ENCODE measurements at regions of chr12 and their contacts with region 1.

Region 1: GRCh38 chr12:54359033-54359761 is 5.1 kb downstream of the GPR84 start:
- DNase-seq: peak; percentile 97
- ATAC-seq: peak; percentile 96
- H3K4me3 ChIP-seq: peak overlapping the region; percentile 84
- H3K27ac ChIP-seq: peak overlapping the region; percentile 92
- H3K4me1 ChIP-seq: peaks cover 23% of the 10 kb centered on the region
- H3K27me3 ChIP-seq: no peaks in the 10 kb centered on the region
- CTCF ChIP-seq: no peak
- EP300 ChIP-seq: peak in 1 of 2 experiments; percentile 55; a peak in 2 of 4 replicates
- POLR2A ChIP-seq: peak; percentile 63
- RAD21 ChIP-seq: no peak

Region 2: DNA sequence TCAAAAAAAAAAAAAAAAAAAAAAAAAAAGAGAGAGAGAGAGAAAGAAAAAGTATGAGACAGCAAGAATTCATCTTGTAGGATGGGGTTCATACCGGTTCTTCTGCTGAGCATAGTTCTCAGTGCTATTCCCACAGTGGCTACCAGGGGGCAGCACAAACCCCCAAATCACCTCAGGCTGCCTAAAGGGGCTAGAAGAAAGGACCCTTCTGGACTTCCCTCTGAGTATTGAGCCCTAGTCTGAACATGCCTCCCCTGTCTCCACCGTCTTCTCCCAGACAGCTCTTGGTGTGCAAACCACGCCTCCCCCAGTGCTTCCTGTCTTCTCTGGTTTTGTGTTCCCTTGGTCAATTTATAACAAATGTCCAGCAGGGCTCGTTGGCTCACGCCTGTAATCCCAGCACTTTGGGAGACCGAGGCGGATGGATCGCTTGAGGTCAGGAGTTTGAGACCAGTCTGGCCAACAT is 139.1 kb before region 1 on chr12:
- CTCF ChIA-PET with region 1: interaction called, 83 read pairs
- POLR2A ChIA-PET with region 1: interaction called, 4 read pairs
- RAD21 ChIA-PET with region 1: interaction called, 16 read pairs
- SMC1A ChIA-PET with region 1: interaction called, 10 read pairs
- in situ Hi-C with region 1: loop called (anchors 5 kb)
- intact Hi-C with region 1: loop called (anchors 2 kb)
- DNase-seq: no peak
- ATAC-seq: peak; percentile 58
- H3K4me3 ChIP-seq: no peak overlapping the region
- H3K27ac ChIP-seq: no peak overlapping the region
- H3K4me1 ChIP-seq: peaks cover 30% of the 10 kb centered on the region
- H3K27me3 ChIP-seq: peaks cover 0 to 1% of the 10 kb centered on the region in 2 experiments; a peak in 1 of 4 replicates
- CTCF ChIP-seq: peak; percentile 84 to 90 (median 90)
- EP300 ChIP-seq: no peak
- POLR2A ChIP-seq: no peak
- RAD21 ChIP-seq: peak; percentile 87

Region 3: DNA sequence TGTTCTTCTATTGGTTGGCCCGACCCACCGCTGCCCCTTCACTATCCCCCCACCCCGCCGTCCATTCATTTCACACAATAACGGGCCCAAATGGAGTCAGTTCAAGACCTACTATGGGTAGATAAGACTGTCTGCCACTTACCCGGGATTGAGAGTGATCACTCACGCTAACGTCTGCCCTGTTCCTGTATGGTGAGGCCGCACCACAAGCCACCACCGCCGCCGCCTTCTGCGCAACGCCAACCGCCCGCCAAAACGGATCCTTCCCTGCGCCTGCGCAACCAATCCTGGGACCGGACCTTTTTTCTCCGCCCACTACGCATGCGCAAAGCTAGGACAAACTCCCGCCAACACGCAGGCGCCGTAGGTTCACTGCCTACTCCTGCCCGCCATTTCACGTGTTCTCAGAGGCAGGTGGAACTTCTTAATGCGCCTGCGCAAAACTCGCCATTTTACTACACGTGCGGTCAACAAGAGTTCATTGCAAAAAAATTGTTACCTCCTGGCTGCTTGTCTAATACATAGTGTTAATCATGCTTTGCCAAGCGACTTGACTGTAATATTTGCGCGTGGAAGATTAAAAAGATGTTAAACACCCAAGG is 79.2 kb before region 1 on chr12 and contains the start of gene CBX5:
- CTCF ChIA-PET with region 1: interaction called, 13 read pairs
- POLR2A ChIA-PET with region 1: interaction called, 29 read pairs
- RAD21 ChIA-PET with region 1: interaction called, 11 read pairs
- SMC1A ChIA-PET with region 1: interaction called, 12 read pairs
- in situ Hi-C with region 1: no loop called
- intact Hi-C with region 1: no loop called
- DNase-seq: peak; percentile 98
- ATAC-seq: peak; percentile 48
- H3K4me3 ChIP-seq: peak within 1 kb of the TSS; percentile 81
- H3K27ac ChIP-seq: peak within 1 kb of the TSS; percentile 99
- H3K4me1 ChIP-seq: peaks cover 18% of the 10 kb centered on the region
- H3K27me3 ChIP-seq: no peaks in the 10 kb centered on the region
- CTCF ChIP-seq: no peak
- EP300 ChIP-seq: no peak
- POLR2A ChIP-seq: peak; percentile 83
- RAD21 ChIP-seq: no peak
- polyA plus RNA-seq, gene CBX5: 66.9 to 67.1 TPM

Region 4: GRCh38 chr12:54294152-54294952 is 64.8 kb before region 1 on chr12:
- CTCF ChIA-PET with region 1: interaction called, 116 read pairs
- POLR2A ChIA-PET with region 1: interaction called, 10 read pairs
- RAD21 ChIA-PET with region 1: interaction called, 5 read pairs
- SMC1A ChIA-PET with region 1: interaction called, 10 read pairs
- in situ Hi-C with region 1: loop called (anchors 5 kb)
- intact Hi-C with region 1: loop called (anchors 2 kb)
- DNase-seq: no peak
- ATAC-seq: peak; percentile 81
- H3K4me3 ChIP-seq: no peak overlapping the region
- H3K27ac ChIP-seq: no peak overlapping the region
- H3K4me1 ChIP-seq: no peaks in the 10 kb centered on the region
- H3K27me3 ChIP-seq: peaks cover 0 to 4% of the 10 kb centered on the region in 2 experiments
- CTCF ChIP-seq: peak; percentile 74 to 94 (median 91)
- EP300 ChIP-seq: no peak
- POLR2A ChIP-seq: no peak
- RAD21 ChIP-seq: peak; percentile 86

Region 5: GRCh38 chr12:54337280-54337842 is 21.8 kb before region 1 on chr12:
- CTCF ChIA-PET with region 1: interaction called, 113 read pairs
- POLR2A ChIA-PET with region 1: interaction called, 5 read pairs
- RAD21 ChIA-PET with region 1: interaction called, 9 read pairs
- SMC1A ChIA-PET with region 1: interaction called, 13 read pairs
- in situ Hi-C with region 1: no loop called
- intact Hi-C with region 1: no loop called
- DNase-seq: no peak
- ATAC-seq: no peak
- H3K4me3 ChIP-seq: no peak overlapping the region
- H3K27ac ChIP-seq: no peak overlapping the region
- H3K4me1 ChIP-seq: no peaks in the 10 kb centered on the region
- H3K27me3 ChIP-seq: no peaks in the 10 kb centered on the region
- CTCF ChIP-seq: 0 out of 6 replicates have a peak, but pooled peaks of 1 of the 3 experiments have one; percentile 5
- EP300 ChIP-seq: no peak
- POLR2A ChIP-seq: no peak
- RAD21 ChIP-seq: 0 out of 2 replicates have a peak, but pooled peaks have one; percentile 16